HCT116 (cell line): ENCODE measurements at regions of chr13 and their contacts with region 1.

Region 1: GRCh38 chr13:45310341-45311125 is 30.4 kb downstream of the TPT1 start:
- DNase-seq: no peak
- ATAC-seq: peak; percentile 35; the same call in 1 of the 2 replicates
- H3K4me3 ChIP-seq: no peak overlapping the region
- H3K27ac ChIP-seq: no peak overlapping the region
- H3K4me1 ChIP-seq: peaks cover 2 to 16% of the 10 kb centered on the region in 2 experiments; a peak in 3 of 4 replicates
- H3K27me3 ChIP-seq: no peaks in the 10 kb centered on the region
- CTCF ChIP-seq: no peak
- POLR2A ChIP-seq: no peak
- RAD21 ChIP-seq: no peak

Region 2: DNA sequence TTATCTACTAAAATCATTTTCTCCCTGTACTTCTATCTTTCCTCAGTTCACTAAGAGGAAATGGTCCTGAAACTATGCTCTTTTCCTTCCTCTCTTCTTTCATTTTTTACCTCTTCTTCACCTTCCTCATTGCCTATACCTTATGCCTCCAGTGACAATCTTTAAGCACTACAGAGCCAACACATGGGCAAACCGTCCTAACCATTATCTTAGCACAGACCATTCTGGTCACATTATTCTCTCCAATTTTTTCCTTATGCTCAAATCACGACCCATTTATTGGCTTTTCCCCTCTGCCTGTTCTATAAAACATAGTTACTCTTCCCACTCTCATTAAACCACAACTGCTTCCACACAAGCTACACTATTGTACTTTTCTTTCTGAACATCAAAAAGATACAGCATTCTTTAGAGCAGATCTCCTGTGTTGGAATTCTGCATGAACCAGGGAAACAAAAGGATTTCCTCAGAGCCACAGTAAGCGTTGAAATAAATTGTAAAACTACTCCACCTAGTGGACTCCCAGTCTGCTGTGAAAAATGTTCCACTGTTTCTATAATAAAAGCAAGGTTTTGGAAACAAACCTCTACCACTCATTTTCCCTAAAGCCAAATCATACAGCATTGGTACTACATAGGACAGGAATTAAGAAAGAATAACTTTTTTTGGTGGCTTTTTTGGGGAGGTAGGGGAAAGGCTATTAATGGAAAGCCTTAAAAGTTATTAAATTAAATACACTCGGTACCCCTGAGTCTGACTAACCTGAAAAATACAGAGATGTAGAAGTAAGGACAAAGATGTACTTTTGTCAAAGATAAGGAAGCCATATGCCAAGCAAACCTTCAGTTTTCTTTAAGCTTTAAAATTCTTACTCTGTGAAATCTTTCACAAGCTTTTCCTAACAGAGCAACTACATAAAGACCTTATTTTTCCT is 340.7 kb before region 1 on chr13:
- CTCF ChIA-PET with region 1: interaction called, 8 read pairs
- POLR2A ChIA-PET with region 1: no interaction called
- RAD21 ChIA-PET with region 1: no interaction called
- intact Hi-C with region 1: loop called (anchors 1 kb)
- DNase-seq: peak; percentile 26
- ATAC-seq: peak; percentile 66
- H3K4me3 ChIP-seq: no peak overlapping the region
- H3K27ac ChIP-seq: no peak overlapping the region
- H3K4me1 ChIP-seq: no peaks in the 10 kb centered on the region
- H3K27me3 ChIP-seq: no peaks in the 10 kb centered on the region
- CTCF ChIP-seq: peak; percentile 63 to 85 (median 68)
- POLR2A ChIP-seq: no peak
- RAD21 ChIP-seq: peak; percentile 86

Region 3: DNA sequence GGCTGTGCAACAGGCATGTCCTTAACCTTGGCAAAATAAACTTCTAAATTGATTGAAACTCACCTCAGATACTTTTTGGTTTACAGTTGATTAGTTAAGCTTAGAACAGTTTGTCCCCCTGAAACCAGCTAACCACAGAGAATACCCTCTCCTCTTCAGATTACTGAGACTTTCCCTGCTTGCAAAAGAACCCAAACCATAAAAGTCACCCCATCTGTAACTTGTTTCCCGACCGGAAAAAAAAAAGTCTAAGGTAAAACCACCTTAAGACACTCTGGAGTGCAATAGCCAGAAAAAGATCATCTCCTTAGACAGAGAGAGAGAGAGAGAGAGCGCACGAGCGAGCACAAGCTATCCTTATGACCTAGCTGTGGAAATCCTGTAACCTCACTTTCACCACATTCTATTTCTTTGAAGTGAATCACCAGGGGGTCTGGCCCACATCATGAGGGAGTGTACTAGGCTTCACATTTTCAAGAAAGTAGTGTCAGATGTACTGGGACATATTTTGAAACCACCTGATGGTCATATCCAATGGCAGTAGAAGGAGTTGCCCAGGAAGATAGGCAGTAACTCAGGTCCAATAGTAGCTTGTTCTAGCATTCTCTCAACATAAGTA is 201.3 kb before region 1 on chr13:
- CTCF ChIA-PET with region 1: no interaction called
- POLR2A ChIA-PET with region 1: no interaction called
- RAD21 ChIA-PET with region 1: no interaction called
- intact Hi-C with region 1: no loop called
- DNase-seq: no peak
- ATAC-seq: peak; percentile 47; the same call in 1 of the 2 replicates
- H3K4me3 ChIP-seq: no peak overlapping the region
- H3K27ac ChIP-seq: no peak overlapping the region
- H3K4me1 ChIP-seq: no peaks in the 10 kb centered on the region
- H3K27me3 ChIP-seq: no peaks in the 10 kb centered on the region
- CTCF ChIP-seq: no peak
- POLR2A ChIP-seq: no peak
- RAD21 ChIP-seq: no peak

Region 4: GRCh38 chr13:45989607-45990006 is 679.1 kb after region 1 on chr13:
- CTCF ChIA-PET with region 1: no interaction called
- POLR2A ChIA-PET with region 1: no interaction called
- RAD21 ChIA-PET with region 1: no interaction called
- intact Hi-C with region 1: no loop called
- DNase-seq: no peak
- ATAC-seq: no peak
- H3K4me3 ChIP-seq: no peak overlapping the region
- H3K27ac ChIP-seq: no peak overlapping the region
- H3K4me1 ChIP-seq: no peaks in the 10 kb centered on the region
- H3K27me3 ChIP-seq: no peaks in the 10 kb centered on the region
- CTCF ChIP-seq: no peak
- POLR2A ChIP-seq: no peak
- RAD21 ChIP-seq: no peak